Activated B cell treated with CpG ODN at 0.5 μM for 24 hours (primary cell): ENCODE measurements at regions of chr2 and their contacts with region 1.

Region 1: DNA sequence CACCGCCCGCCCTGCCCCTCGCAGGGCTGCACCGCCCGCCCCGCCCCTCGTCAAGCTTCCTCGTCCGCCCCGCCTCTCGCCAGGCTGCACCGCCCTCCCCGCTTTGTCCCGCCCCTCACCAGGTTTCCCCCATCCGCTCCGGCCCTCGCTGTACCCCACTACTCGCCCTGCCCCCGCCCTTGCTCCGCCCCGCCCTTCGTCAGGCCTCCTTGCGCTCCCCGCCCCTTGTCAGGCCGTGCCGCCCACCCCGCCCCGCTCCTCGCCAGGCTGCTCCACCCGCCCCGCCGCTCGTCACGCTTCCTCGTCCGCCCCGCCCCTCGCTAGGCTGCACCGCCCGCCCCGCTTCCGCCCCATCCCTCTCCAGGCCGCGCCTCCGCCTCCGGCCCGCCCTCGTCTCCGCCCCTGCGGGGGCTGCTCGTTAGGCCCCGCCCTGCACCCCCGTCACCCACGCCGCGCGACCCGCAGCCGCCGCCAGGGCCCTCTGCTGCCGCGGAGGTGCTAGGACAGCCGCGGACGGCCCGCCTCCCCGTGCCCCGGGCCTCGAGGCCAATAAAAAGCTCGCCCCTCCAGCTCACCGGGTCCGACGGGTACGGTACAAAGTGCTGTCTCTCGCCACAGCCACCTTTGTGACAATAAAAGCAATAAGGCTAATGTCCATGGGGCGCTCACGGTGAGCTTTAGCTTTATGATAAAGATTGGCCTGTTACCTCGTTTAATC is 574 bp upstream of the DNPEP start:
- DNase-seq: peak; percentile 99
- ATAC-seq: peak; percentile 79
- H3K4me3 Mint-ChIP-seq: peak overlapping the region; percentile 71
- H3K27ac Mint-ChIP-seq: peak overlapping the region; percentile 84
- H3K4me1 Mint-ChIP-seq: peaks cover 16% of the 10 kb centered on the region
- H3K27me3 Mint-ChIP-seq: peaks cover 4% of the 10 kb centered on the region
- CTCF ChIP-seq: no peak

Region 2: DNA sequence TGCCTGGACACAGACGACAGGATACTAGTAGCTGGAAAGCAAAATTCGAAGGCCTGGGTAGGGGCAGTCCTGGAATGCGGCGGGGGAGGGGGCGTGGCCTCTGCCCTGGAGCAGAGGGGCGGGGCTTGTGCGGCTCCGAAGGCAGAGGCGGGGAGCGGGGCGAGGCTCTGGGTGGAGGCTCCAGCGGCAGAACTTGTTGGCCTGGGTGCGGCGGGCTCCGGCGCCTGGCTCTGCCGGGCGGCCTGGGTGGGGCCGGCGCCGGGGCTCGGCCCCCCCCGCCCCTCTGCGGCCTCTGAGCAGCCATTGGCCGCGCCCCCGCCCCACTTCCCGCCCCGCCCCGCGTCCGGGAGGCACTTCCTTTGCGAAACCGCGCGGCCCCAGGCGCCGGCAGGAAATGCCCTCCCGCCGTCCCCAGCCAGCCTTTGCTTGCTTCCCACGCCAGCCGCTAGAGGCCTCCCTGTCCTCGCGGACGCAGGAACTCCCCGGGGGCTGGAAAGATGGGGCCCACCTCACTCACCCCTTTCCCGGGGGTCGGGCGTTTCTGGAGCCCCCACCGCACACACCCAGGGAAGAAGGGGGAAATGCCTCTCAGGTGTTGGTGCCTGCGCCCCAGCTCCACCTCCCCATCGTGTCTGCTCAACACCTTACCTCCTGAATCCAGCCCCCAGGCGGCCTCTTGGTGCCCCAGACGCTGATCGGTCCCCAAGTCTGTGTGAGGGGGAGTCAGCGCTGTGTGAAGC is 981.9 kb before region 1 on chr2:
- CTCF ChIA-PET with region 1: no interaction called
- POLR2A ChIA-PET with region 1: no interaction called
- intact Hi-C with region 1: loop called (anchors 10 kb)
- DNase-seq: peak; percentile 89
- ATAC-seq: peak; percentile 83
- H3K4me3 Mint-ChIP-seq: peak overlapping the region; percentile 85
- H3K27ac Mint-ChIP-seq: peak overlapping the region; percentile 86
- H3K4me1 Mint-ChIP-seq: peaks cover 54% of the 10 kb centered on the region
- H3K27me3 Mint-ChIP-seq: no peaks in the 10 kb centered on the region
- CTCF ChIP-seq: no peak

Region 3: GRCh38 chr2:218710687-218711549 is 677.4 kb before region 1 on chr2 and contains the start of gene TTLL4:
- CTCF ChIA-PET with region 1: no interaction called
- POLR2A ChIA-PET with region 1: interaction called, 9 read pairs
- intact Hi-C with region 1: loop called (anchors 1 kb)
- DNase-seq: peak; percentile 98
- ATAC-seq: peak; percentile 97
- H3K4me3 Mint-ChIP-seq: peak within 1 kb of the TSS; percentile 91
- H3K27ac Mint-ChIP-seq: peak within 1 kb of the TSS; percentile 86
- H3K4me1 Mint-ChIP-seq: peaks cover 26% of the 10 kb centered on the region
- H3K27me3 Mint-ChIP-seq: no peaks in the 10 kb centered on the region
- CTCF ChIP-seq: no peak
- total RNA-seq, gene TTLL4: 36.0 and 37.2 TPM in 2 replicates

Region 4: DNA sequence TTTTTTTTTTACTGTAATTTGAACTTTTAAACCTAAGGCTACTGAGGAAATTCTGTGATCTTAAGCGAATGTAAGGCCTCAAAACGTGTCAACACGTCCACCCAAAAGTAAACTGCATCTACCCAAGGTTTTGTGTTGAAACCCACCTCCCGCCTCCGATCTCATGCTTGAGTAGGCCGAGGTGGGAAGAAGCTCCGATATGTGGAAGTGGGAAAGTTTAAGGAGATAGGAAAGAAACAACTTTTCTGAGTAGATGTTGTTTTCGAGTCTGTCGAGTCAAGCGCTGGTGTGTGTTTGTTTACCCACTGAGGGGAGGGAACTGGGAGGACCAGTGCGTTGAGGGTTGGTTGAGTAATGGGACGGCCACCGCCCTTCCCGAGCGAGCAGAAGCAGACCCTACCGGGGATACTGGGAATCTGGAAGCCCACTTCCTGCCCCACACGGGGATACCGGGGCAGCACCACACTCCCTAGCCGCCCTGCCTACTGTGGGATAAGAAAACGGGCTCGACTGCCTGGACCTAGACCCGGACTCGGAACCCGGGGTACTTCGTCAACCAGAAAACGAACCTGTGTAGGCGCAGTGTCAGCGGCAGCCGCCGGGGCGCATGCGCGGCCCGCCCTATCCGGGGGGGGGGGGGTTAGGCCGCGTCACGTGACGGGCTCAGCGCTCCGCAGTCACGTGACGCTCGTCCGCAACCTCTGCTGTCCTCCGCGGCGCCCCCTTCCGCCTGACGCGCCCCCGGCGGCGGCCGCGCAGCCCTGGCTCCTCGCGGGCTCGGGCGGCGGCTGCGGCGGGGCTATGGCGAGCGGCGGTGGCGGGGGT is 210.5 kb before region 1 on chr2 and contains the start of gene RETREG2:
- CTCF ChIA-PET with region 1: no interaction called
- POLR2A ChIA-PET with region 1: interaction called, 20 read pairs
- intact Hi-C with region 1: loop called (anchors 1 kb)
- DNase-seq: peak; percentile 78
- ATAC-seq: peak; percentile 45
- H3K4me3 Mint-ChIP-seq: peak within 1 kb of the TSS; percentile 96
- H3K27ac Mint-ChIP-seq: peak within 1 kb of the TSS; percentile 99
- H3K4me1 Mint-ChIP-seq: peaks cover 40% of the 10 kb centered on the region
- H3K27me3 Mint-ChIP-seq: no peaks in the 10 kb centered on the region
- CTCF ChIP-seq: no peak
- total RNA-seq, gene RETREG2: 60.5 and 78.6 TPM in 2 replicates

Region 5: GRCh38 chr2:219278655-219279516 is 109.4 kb before region 1 on chr2 and contains the start of gene DNAJB2:
- CTCF ChIA-PET with region 1: interaction called, 4 read pairs
- POLR2A ChIA-PET with region 1: interaction called, 18 read pairs
- intact Hi-C with region 1: loop called (anchors 1 kb)
- DNase-seq: peak; percentile 99
- ATAC-seq: peak; percentile 78
- H3K4me3 Mint-ChIP-seq: peak within 1 kb of the TSS; percentile 89
- H3K27ac Mint-ChIP-seq: peak within 1 kb of the TSS; percentile 97
- H3K4me1 Mint-ChIP-seq: peaks cover 49% of the 10 kb centered on the region
- H3K27me3 Mint-ChIP-seq: no peaks in the 10 kb centered on the region
- CTCF ChIP-seq: no peak
- total RNA-seq, gene DNAJB2: 59.0 and 71.1 TPM in 2 replicates

Region 6: GRCh38 chr2:219543601-219544358 is 155.5 kb after region 1 on chr2 and contains the starts of genes CHPF and TMEM198:
- CTCF ChIA-PET with region 1: no interaction called
- POLR2A ChIA-PET with region 1: interaction called, 9 read pairs
- intact Hi-C with region 1: loop called (anchors 1 kb)
- DNase-seq: peak; percentile 81
- ATAC-seq: peak; percentile 84
- H3K4me3 Mint-ChIP-seq: peak within 1 kb of the TSS; percentile 78
- H3K27ac Mint-ChIP-seq: no peak within 1 kb of the TSS
- H3K4me1 Mint-ChIP-seq: peaks cover 22% of the 10 kb centered on the region
- H3K27me3 Mint-ChIP-seq: peaks cover 42% of the 10 kb centered on the region
- CTCF ChIP-seq: no peak
- total RNA-seq, gene CHPF: 4.1 and 4.7 TPM in 2 replicates
- total RNA-seq, gene TMEM198: 0.86 and 1.2 TPM in 2 replicates